Dorsolateral prefrontal cortex (tissue), 120 donors: ENCODE measurements at regions of chr16 and their contacts with region 1.

Region 1: GRCh38 chr16:1492923-1493745 is at the start of gene TELO2:
- DNase-seq: peak; percentile 61 to 87 (median 74)
- H3K4me3 ChIP-seq: peak within 1 kb of the TSS; percentile 58 to 95 (median 81)
- H3K27ac ChIP-seq: peak within 1 kb of the TSS in 57 of 59 donors; percentile 1 to 96 (median 86)
- H3K27me3 ChIP-seq: no peaks in the 10 kb centered on the region
- CTCF ChIP-seq: peak in 10 of 56 donors; percentile 4 to 38 (median 21)
- total RNA-seq, gene TELO2: 21.6 to 46.8 (median 31.5) TPM

Region 2: DNA sequence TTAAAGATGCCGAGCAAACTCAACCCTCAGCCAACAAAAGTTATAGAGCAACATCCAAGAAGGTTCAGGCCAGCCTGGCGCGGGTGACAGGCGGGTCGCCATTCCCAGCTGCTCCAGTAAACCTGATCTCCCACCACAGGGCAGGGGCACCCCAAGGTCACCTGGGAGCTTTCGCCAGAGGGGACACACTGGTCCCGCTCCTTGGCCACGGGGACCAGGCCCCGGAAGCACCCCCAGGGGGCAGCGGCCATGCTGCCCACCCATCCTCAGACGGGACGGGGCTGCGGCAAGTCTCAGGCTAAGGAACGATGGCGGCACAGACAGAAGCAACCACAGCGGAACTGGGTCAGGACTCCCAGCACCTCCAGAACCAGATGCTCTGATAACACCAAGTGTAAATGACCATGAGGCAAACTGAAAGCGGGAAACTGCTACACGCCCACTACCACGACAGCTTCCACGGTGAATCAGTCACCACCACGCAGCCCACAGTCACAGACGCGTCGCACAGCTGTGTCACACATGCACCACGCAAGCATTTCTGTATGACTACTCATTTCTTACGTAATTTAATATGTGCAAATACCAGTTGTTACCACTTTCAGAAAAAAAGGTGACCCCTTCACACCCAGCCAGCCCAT is 34.7 kb before region 1 on chr16:
- intact Hi-C with region 1: no loop called
- DNase-seq: peak in 5 of 10 donors; percentile 39 to 75 (median 45)
- H3K4me3 ChIP-seq: no peak overlapping the region
- H3K27ac ChIP-seq: peak overlapping the region in 3 of 59 donors; percentile 40 to 46 (median 42)
- H3K27me3 ChIP-seq: no peaks in the 10 kb centered on the region
- CTCF ChIP-seq: no peak

Region 3: DNA sequence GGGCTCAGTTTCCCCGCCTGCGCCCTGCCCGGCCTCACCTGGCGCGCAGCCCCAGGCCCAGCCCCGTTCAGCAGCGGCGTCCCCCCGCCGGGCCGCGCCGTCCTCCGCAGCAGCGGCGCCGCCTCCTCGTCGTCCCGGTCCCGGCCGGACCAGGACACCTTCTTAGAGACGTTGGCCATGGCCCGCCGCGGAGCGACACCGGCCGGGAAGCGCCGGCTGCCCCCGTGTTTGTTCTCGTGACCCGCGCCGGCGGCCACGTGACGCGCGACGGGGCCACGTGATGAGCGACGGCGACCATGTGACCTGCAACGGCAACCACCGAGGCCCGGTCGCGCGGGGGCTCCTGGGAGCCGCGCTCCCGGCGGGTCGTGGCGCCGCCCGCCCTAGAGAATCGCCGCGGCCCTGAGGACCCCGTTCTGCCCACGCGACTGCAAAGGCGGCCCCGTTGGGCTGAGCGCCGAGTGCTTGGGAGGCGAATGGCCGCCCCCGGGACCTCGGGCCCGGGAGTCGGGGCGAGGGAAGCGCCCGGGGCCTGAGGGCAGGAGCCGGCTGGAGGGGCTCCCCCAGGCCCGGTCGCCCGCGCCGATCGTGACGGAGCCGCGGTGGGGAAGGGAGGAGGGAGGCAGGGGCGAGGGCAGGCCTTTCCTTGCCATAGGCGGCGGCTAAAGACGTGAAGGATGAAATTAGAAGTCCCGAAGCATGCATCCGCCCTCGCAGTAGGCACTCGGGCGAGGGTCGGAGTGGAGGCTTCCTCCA is 18.2 kb before region 1 on chr16 and contains the start of gene CLCN7:
- intact Hi-C with region 1: loop called in 1 of 2 experiments (anchors 1 kb)
- DNase-seq: peak; percentile 74 to 94 (median 88)
- H3K4me3 ChIP-seq: peak within 1 kb of the TSS; percentile 68 to 100 (median 97)
- H3K27ac ChIP-seq: peak within 1 kb of the TSS; percentile 70 to 98 (median 93)
- H3K27me3 ChIP-seq: no peaks in the 10 kb centered on the region
- CTCF ChIP-seq: peak in 32 of 56 donors; percentile 5 to 63 (median 33)
- total RNA-seq, gene CLCN7: 75.5 to 169 (median 114) TPM

Region 4: GRCh38 chr16:1772736-1773584 is 279.8 kb after region 1 on chr16 and contains the starts of genes EME2 and MRPS34:
- intact Hi-C with region 1: loop called in 1 of 2 experiments (anchors 5 kb)
- DNase-seq: peak; percentile 47 to 89 (median 78)
- H3K4me3 ChIP-seq: peak within 1 kb of the TSS; percentile 77 to 100 (median 95)
- H3K27ac ChIP-seq: peak within 1 kb of the TSS; percentile 81 to 99 (median 95)
- H3K27me3 ChIP-seq: no peaks in the 10 kb centered on the region
- CTCF ChIP-seq: peak; percentile 37 to 83 (median 68)
- total RNA-seq, gene EME2: 12.6 to 44.4 (median 21.7) TPM
- total RNA-seq, gene MRPS34: 37.4 to 77.9 (median 58.6) TPM